SK-N-SH (cell line): ENCODE measurements at regions of chr12 and their contacts with region 1.

Region 1: GRCh38 chr12:4307593-4308333 is 13.2 kb upstream of the TIGAR start:
- DNase-seq: peak; percentile 84
- H3K4me3 ChIP-seq: peak overlapping the region; percentile 27 to 32; a peak in 2 of 4 replicates
- H3K27ac ChIP-seq: no peak overlapping the region
- H3K4me1 ChIP-seq: peaks cover 0 to 5% of the 10 kb centered on the region in 2 experiments; a peak in 1 of 4 replicates
- H3K27me3 ChIP-seq: peaks cover 54% of the 10 kb centered on the region
- CTCF ChIP-seq: peak; percentile 66
- EP300 ChIP-seq: no peak
- RAD21 ChIP-seq: peak; percentile 87

Region 2: GRCh38 chr12:4246116-4246515 is 61.6 kb before region 1 on chr12:
- CTCF ChIA-PET with region 1: no interaction called
- POLR2A ChIA-PET with region 1: no interaction called
- DNase-seq: no peak
- H3K4me3 ChIP-seq: no peak overlapping the region
- H3K27ac ChIP-seq: no peak overlapping the region
- H3K4me1 ChIP-seq: no peaks in the 10 kb centered on the region
- H3K27me3 ChIP-seq: peaks cover 32% of the 10 kb centered on the region; the same call in 1 of the 2 replicates
- CTCF ChIP-seq: no peak
- EP300 ChIP-seq: no peak
- RAD21 ChIP-seq: no peak

Region 3: GRCh38 chr12:4293299-4293965 is 14.3 kb before region 1 on chr12:
- CTCF ChIA-PET with region 1: interaction called, 14 read pairs
- POLR2A ChIA-PET with region 1: no interaction called
- DNase-seq: no peak
- H3K4me3 ChIP-seq: no peak overlapping the region
- H3K27ac ChIP-seq: no peak overlapping the region
- H3K4me1 ChIP-seq: no peaks in the 10 kb centered on the region
- H3K27me3 ChIP-seq: peaks cover 98% of the 10 kb centered on the region
- CTCF ChIP-seq: no peak
- EP300 ChIP-seq: no peak
- RAD21 ChIP-seq: no peak

Region 4: GRCh38 chr12:4324366-4324765 is 16.6 kb after region 1 on chr12:
- CTCF ChIA-PET with region 1: interaction called, 10 read pairs
- POLR2A ChIA-PET with region 1: no interaction called
- DNase-seq: no peak
- H3K4me3 ChIP-seq: no peak overlapping the region
- H3K27ac ChIP-seq: no peak overlapping the region
- H3K4me1 ChIP-seq: peaks cover 0 to 8% of the 10 kb centered on the region in 2 experiments; a peak in 2 of 4 replicates
- H3K27me3 ChIP-seq: no peaks in the 10 kb centered on the region
- CTCF ChIP-seq: no peak
- EP300 ChIP-seq: no peak
- RAD21 ChIP-seq: no peak

Region 5: DNA sequence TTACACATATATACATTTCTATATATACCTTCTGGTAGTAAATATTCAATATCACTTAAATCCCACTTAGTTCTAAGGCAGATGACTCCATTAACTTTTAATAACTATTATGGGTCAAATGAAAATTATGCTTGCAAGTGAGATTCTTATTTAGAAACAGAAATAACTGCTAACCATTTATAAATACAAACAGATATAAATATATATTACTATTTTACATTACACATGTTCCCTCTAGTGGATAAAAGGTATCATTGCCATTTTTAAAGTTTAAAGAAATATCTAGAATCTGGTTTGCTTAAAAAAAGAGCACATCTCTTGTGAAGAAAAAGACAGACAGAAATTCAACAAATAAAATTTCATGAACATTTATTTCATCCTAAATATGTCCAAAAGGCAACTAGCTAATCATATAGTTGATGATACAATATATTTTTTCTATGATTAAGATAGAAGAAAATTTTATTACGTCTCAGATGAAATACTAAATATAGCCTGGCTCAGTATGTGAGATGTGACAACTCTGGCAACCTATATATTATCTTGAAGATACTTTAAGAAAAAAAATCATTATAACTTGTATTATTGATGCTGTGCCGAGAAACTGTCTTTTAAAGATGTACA is 219.3 kb after region 1 on chr12:
- CTCF ChIA-PET with region 1: interaction called, 20 read pairs
- POLR2A ChIA-PET with region 1: no interaction called
- DNase-seq: peak; percentile 7
- H3K4me3 ChIP-seq: no peak overlapping the region
- H3K27ac ChIP-seq: no peak overlapping the region
- H3K4me1 ChIP-seq: no peaks in the 10 kb centered on the region
- H3K27me3 ChIP-seq: no peaks in the 10 kb centered on the region
- CTCF ChIP-seq: peak; percentile 66
- EP300 ChIP-seq: no peak
- RAD21 ChIP-seq: peak; percentile 42